Endothelial cell of umbilical vein (primary cell): ENCODE measurements at regions of chr2 and their contacts with region 1.

Region 1: GRCh38 chr2:136238286-136239078 is 120.5 kb upstream of the CXCR4 start:
- DNase-seq: peak; percentile 89
- H3K4me3 ChIP-seq: no peak overlapping the region
- H3K27ac ChIP-seq: peak overlapping the region; percentile 96
- H3K4me1 ChIP-seq: peaks cover 70% of the 10 kb centered on the region
- H3K27me3 ChIP-seq: no peaks in the 10 kb centered on the region
- CTCF ChIP-seq: no peak
- POLR2A ChIP-seq: peak; percentile 58

Region 2: DNA sequence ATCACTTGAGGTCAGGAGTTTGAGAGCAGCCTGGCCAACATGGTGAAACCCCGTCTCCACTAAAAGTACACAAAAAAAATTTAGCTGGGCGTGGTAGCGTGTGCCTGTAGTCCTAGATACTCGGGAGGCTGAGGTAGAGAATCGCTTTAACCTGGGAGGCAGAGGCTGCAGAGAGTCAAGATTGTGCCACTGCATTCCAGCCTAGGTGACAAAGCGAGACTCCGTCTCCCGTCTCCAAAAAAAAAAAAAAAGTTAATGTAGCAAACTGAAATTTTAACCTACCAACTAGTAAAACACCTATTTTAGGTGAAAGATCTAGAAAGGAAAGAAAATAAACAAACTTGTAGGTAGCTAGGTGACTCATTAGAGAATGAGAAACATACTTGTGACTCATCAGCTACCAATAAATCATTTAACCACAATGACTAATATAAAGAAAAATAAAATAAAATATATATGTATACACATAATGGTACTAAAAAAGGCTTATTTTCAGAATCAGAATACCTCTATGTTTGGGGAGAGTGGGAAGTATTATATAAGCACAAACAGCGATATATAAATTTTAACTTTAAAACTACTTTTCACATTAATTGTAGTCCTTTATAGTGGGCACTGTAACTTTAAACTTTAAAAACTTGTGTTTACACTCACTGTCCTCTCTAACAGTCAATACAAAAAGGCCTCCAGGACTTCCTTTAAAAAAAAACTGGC is 289.7 kb before region 1 on chr2:
- CTCF ChIA-PET with region 1: no interaction called
- POLR2A ChIA-PET with region 1: no interaction called
- dilution Hi-C with region 1: no loop called
- intact Hi-C with region 1: loop called (anchors 2 kb)
- DNase-seq: peak; percentile 69
- H3K4me3 ChIP-seq: no peak overlapping the region
- H3K27ac ChIP-seq: peak overlapping the region; percentile 70
- H3K4me1 ChIP-seq: peaks cover 20% of the 10 kb centered on the region
- H3K27me3 ChIP-seq: no peaks in the 10 kb centered on the region
- CTCF ChIP-seq: no peak
- POLR2A ChIP-seq: no peak

Region 3: GRCh38 chr2:136013955-136014354 is 224.5 kb before region 1 on chr2:
- CTCF ChIA-PET with region 1: no interaction called
- POLR2A ChIA-PET with region 1: no interaction called
- dilution Hi-C with region 1: no loop called
- intact Hi-C with region 1: loop called (anchors 5 kb)
- DNase-seq: peak; percentile 74
- H3K4me3 ChIP-seq: no peak overlapping the region
- H3K27ac ChIP-seq: no peak overlapping the region
- H3K4me1 ChIP-seq: no peaks in the 10 kb centered on the region
- H3K27me3 ChIP-seq: peaks cover 15 to 22% of the 10 kb centered on the region in 2 experiments
- CTCF ChIP-seq: no peak
- POLR2A ChIP-seq: no peak

Region 4: GRCh38 chr2:136117909-136118818 is 120.3 kb before region 1 on chr2 and contains the start of gene CXCR4:
- CTCF ChIA-PET with region 1: no interaction called
- POLR2A ChIA-PET with region 1: no interaction called
- dilution Hi-C with region 1: no loop called
- intact Hi-C with region 1: loop called (anchors 2 kb)
- DNase-seq: peak; percentile 52
- H3K4me3 ChIP-seq: peak within 1 kb of the TSS; percentile 45 to 73 (median 69)
- H3K27ac ChIP-seq: no peak within 1 kb of the TSS
- H3K4me1 ChIP-seq: peaks cover 23% of the 10 kb centered on the region
- H3K27me3 ChIP-seq: peaks cover 48 to 73% of the 10 kb centered on the region in 2 experiments
- CTCF ChIP-seq: peak; percentile 16 to 32
- POLR2A ChIP-seq: peak; percentile 55
- total RNA-seq, gene CXCR4: 52.4 and 81.0 TPM in 2 replicates

Region 5: GRCh38 chr2:136225950-136226835 is 12.3 kb before region 1 on chr2:
- CTCF ChIA-PET with region 1: no interaction called
- POLR2A ChIA-PET with region 1: no interaction called
- dilution Hi-C with region 1: no loop called
- intact Hi-C with region 1: no loop called
- DNase-seq: no peak
- H3K4me3 ChIP-seq: no peak overlapping the region
- H3K27ac ChIP-seq: no peak overlapping the region
- H3K4me1 ChIP-seq: no peaks in the 10 kb centered on the region
- H3K27me3 ChIP-seq: peaks cover 15 to 16% of the 10 kb centered on the region in 2 experiments
- CTCF ChIP-seq: no peak
- POLR2A ChIP-seq: no peak